Endothelial cell of umbilical vein (primary cell): ENCODE measurements at regions of chr15 and their contacts with region 1.

Region 1: GRCh38 chr15:72375847-72376581 is at the start of gene HEXA:
- DNase-seq: peak; percentile 93
- H3K4me3 ChIP-seq: peak within 1 kb of the TSS; percentile 65 to 99 (median 84)
- H3K27ac ChIP-seq: peak within 1 kb of the TSS; percentile 48
- H3K4me1 ChIP-seq: peaks cover 28% of the 10 kb centered on the region
- H3K27me3 ChIP-seq: no peaks in the 10 kb centered on the region
- CTCF ChIP-seq: no peak
- POLR2A ChIP-seq: peak; percentile 77
- total RNA-seq, gene HEXA: 100 and 108 TPM in 2 replicates

Region 2: DNA sequence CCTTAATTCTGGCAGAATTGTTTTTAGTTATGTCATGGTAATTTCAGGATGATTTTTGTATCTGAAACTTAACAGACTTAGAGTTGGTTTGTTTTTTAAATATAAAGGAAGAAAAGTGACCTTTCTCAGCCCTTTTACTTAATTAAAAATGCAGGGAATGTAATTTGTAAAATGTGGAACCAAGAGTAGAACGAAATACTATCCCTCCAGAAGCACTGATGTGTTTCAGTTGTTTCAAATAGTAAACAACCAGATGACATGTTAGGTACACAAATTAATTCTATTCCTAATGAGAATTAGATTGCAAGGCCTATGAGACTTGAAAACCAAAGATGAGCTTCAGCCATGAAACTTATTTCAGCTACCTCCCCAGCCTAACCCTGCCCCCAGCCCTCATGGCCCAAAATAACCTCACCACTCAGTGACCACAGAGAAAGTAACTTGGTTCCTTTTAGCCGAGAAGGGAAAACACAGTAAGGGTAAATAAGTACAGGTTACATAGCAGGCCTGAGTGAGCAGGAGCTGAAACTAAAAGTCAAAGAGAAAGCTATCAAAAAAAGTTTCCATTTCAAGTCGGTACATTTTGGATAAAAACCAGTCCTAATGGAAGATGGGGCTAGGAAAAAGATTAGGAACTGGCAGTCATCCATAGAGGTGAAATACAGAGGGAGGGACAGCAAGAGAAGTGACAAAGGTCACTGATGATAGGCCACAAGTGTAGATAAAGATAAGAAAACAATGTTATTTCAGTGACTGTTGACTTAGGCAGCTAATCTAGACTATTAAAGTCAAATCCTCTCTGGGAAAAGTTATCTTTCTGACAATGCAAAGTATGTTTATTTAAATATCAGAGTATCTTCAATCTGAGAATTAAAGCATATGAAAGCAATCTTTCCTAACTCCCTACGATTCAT is 234.6 kb before region 1 on chr15:
- CTCF ChIA-PET with region 1: no interaction called
- POLR2A ChIA-PET with region 1: interaction called, 13 read pairs
- dilution Hi-C with region 1: no loop called
- intact Hi-C with region 1: no loop called
- DNase-seq: peak; percentile 37
- H3K4me3 ChIP-seq: no peak overlapping the region
- H3K27ac ChIP-seq: no peak overlapping the region
- H3K4me1 ChIP-seq: no peaks in the 10 kb centered on the region
- H3K27me3 ChIP-seq: no peaks in the 10 kb centered on the region
- CTCF ChIP-seq: no peak
- POLR2A ChIP-seq: no peak

Region 3: DNA sequence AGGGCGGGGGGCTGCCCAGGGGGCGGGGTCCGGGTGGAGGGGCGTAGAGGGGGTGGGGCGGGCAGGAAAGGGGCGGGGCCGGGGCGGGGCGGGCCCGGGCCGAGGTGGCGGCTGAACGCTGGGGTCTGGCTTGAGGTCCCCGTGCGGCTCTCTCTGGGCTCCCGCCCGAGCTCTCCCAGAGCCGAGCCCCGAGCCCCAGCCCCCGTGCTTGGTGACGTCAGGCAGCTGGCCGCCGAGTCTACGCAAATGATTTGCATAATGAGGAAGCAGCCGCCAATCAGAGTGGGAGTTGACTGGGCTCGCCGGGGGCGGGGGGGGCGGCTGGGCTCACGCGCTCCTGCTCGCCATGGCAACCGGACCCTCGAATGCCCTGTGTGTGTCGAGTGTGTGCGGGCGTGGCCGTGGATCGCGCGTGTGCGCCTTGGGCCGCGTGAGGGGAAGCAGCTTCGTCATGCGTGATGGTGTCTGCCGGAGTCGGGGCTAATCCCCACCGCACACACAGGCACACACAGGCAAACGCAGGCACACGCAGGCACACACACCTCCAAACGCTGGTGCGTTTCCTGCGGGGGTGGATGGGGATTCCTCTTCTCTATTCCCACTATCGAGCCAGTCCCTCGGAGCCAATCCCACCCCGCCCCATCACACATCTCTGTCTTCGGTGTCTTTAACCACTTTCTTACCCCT is 55.9 kb before region 1 on chr15 and contains the start of gene CELF6:
- CTCF ChIA-PET with region 1: no interaction called
- POLR2A ChIA-PET with region 1: no interaction called
- dilution Hi-C with region 1: no loop called
- intact Hi-C with region 1: no loop called
- DNase-seq: peak; percentile 85
- H3K4me3 ChIP-seq: peak within 1 kb of the TSS in 2 of 3 experiments; percentile 28 to 42
- H3K27ac ChIP-seq: no peak within 1 kb of the TSS
- H3K4me1 ChIP-seq: no peaks in the 10 kb centered on the region
- H3K27me3 ChIP-seq: peaks cover 0 to 3% of the 10 kb centered on the region in 2 experiments
- CTCF ChIP-seq: no peak
- POLR2A ChIP-seq: no peak
- total RNA-seq, gene CELF6: 0.30 TPM in 1 of 2 replicates, not detected in the other

Region 4: DNA sequence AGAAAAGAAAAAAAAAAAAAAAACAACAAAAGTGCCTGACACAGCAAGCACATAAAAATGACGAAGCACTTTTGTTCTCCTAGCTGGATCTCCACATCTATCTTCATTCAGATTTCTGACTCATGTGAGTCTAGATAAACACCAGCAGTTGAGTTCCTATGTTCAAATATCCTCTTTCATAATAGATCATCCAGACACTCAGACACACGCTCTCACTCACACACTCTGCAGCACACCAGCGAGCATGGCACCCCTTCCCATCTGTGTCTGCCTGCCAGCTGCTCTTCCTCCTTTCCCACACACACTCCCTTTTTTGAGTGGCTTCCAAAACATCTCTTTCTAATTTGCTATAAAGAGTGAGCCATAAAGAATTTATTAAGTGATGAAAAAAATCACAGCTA is 36.2 kb before region 1 on chr15:
- CTCF ChIA-PET with region 1: no interaction called
- POLR2A ChIA-PET with region 1: no interaction called
- dilution Hi-C with region 1: no loop called
- intact Hi-C with region 1: no loop called
- DNase-seq: peak; percentile 75
- H3K4me3 ChIP-seq: no peak overlapping the region
- H3K27ac ChIP-seq: peak overlapping the region; percentile 57
- H3K4me1 ChIP-seq: peaks cover 7% of the 10 kb centered on the region
- H3K27me3 ChIP-seq: no peaks in the 10 kb centered on the region
- CTCF ChIP-seq: no peak
- POLR2A ChIP-seq: no peak

Region 5: GRCh38 chr15:72473614-72474465 is 97.8 kb after region 1 on chr15 and contains the start of gene ARIH1:
- CTCF ChIA-PET with region 1: no interaction called
- POLR2A ChIA-PET with region 1: interaction called, 4 read pairs
- dilution Hi-C with region 1: no loop called
- intact Hi-C with region 1: loop called (anchors 1 kb)
- DNase-seq: peak; percentile 96
- H3K4me3 ChIP-seq: peak within 1 kb of the TSS; percentile 94 to 99 (median 99)
- H3K27ac ChIP-seq: peak within 1 kb of the TSS; percentile 97
- H3K4me1 ChIP-seq: peaks cover 27% of the 10 kb centered on the region
- H3K27me3 ChIP-seq: no peaks in the 10 kb centered on the region
- CTCF ChIP-seq: peak; percentile 21 to 23
- POLR2A ChIP-seq: peak; percentile 90
- total RNA-seq, gene ARIH1: 137 and 144 TPM in 2 replicates

Region 6: GRCh38 chr15:72532991-72533601 is 157.1 kb after region 1 on chr15:
- CTCF ChIA-PET with region 1: interaction called, 5 read pairs
- POLR2A ChIA-PET with region 1: no interaction called
- dilution Hi-C with region 1: no loop called
- intact Hi-C with region 1: loop called (anchors 10 kb)
- DNase-seq: no peak
- H3K4me3 ChIP-seq: no peak overlapping the region
- H3K27ac ChIP-seq: no peak overlapping the region
- H3K4me1 ChIP-seq: no peaks in the 10 kb centered on the region
- H3K27me3 ChIP-seq: no peaks in the 10 kb centered on the region
- CTCF ChIP-seq: peak; percentile 13 to 38
- POLR2A ChIP-seq: no peak